ENCODE measurements at regions of chr15 and their contacts with region 1.

Region 1: DNA sequence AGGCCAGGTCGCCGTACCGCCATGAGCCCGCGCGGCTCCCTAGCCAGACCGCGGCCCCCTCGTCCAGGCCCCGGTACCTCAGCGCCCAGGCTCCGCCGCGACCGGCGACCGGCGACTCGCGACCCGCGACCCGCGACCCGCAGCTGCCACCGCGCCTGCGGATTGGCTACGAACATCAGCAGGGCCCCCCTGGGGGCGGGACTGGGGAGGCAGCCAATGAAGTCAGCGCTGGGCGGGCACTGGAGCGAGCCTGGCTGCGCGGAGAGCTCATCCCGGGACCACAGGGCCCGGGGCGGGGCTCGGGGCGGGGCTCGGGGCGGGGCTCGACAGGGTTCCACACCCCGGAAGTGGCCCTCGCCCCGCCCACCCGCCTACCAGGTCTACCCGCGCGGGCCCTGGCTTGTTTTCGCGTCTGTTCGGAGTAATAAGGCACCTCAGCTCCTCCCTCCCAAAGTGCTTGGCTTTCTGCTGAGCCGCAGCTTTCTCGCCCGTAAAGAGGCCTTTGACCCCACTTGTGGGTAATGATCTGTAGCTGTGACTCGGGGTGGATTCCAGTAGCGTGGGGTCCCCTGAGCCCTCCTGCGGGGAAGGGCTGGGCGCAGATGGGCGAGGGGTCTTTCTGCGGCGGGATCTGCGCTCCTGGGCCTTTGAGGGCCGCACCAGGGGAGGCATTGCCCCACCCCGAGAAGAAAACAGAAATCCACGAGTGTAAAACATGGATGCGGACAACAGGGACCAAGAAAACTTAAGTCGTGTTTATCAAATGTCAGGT is at the start of gene LYSMD4:
- DNase-seq: peak; percentile 96
- ATAC-seq: peak; percentile 100
- H3K4me3 ChIP-seq: peak within 1 kb of the TSS; percentile 12 to 89 (median 77)
- H3K4me3 Mint-ChIP-seq: peak within 1 kb of the TSS; percentile 90
- H3K27ac ChIP-seq: peak within 1 kb of the TSS; percentile 70 to 77
- H3K27ac Mint-ChIP-seq: peak within 1 kb of the TSS; percentile 90
- H3K4me1 ChIP-seq: peaks cover 10 to 13% of the 10 kb centered on the region in 2 donors
- H3K4me1 Mint-ChIP-seq: peaks cover 14% of the 10 kb centered on the region
- H3K27me3 ChIP-seq: no peaks in the 10 kb centered on the region
- H3K27me3 Mint-ChIP-seq: no peaks in the 10 kb centered on the region
- CTCF ChIP-seq: no peak
- total RNA-seq, gene LYSMD4: 8.6 and 9.7 TPM in 2 replicates

Region 2: DNA sequence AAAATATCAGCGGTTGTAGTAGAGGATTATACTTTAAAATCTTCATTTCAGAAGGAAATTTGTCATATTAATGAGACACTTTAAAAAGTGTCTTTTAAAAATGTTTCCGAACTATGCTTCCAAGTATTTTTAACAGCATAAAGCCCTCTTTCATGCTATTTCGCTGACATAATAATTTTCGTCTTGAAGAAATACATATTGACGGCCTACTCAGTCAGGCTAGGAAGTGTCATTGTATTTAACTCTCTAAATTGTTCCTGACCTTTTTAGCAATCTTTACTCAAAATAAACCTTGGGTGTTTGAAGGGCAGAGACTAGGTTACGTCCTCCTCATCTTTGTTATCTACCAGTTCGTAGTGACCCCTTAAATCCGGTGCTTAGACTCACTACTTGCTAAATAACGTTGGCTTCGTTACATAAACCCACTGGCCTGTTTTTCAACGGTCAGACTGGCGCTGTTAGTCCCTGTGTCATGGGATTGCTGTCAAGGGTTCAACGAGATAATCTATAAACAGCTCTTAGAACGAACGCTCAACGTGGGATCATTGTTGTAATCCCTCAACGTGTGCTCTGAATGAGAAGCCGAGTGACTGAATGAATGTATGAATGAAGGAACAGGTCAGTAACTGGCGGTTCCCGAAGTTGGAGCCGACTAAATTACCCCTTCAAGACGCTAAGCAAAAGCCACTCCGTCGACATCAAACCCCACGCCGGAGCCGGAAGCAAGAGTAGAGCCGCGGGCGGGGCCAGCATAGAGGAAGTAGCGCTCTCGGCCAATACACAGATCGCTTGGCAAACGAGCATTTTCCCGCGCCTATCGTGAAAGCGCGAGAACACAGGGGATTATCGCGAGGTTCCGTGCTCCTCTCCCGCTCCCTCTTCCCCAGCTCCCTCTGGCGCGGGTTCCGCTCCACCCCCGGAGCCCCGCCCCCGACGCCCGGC is 482.7 kb before region 1 on chr15:
- CTCF ChIA-PET with region 1: interaction called, 3 read pairs
- POLR2A ChIA-PET with region 1: interaction called, 18 read pairs
- intact Hi-C with region 1: loop called (anchors 1 kb)
- DNase-seq: peak; percentile 97
- ATAC-seq: peak; percentile 97
- H3K4me3 ChIP-seq: peak overlapping the region; percentile 61 to 91 (median 81)
- H3K4me3 Mint-ChIP-seq: peak overlapping the region; percentile 96
- H3K27ac ChIP-seq: peak overlapping the region; percentile 70 to 81
- H3K27ac Mint-ChIP-seq: peak overlapping the region; percentile 92
- H3K4me1 ChIP-seq: peaks cover 18 to 30% of the 10 kb centered on the region in 2 donors
- H3K4me1 Mint-ChIP-seq: peaks cover 31% of the 10 kb centered on the region
- H3K27me3 ChIP-seq: no peaks in the 10 kb centered on the region
- H3K27me3 Mint-ChIP-seq: no peaks in the 10 kb centered on the region
- CTCF ChIP-seq: no peak

Region 3: DNA sequence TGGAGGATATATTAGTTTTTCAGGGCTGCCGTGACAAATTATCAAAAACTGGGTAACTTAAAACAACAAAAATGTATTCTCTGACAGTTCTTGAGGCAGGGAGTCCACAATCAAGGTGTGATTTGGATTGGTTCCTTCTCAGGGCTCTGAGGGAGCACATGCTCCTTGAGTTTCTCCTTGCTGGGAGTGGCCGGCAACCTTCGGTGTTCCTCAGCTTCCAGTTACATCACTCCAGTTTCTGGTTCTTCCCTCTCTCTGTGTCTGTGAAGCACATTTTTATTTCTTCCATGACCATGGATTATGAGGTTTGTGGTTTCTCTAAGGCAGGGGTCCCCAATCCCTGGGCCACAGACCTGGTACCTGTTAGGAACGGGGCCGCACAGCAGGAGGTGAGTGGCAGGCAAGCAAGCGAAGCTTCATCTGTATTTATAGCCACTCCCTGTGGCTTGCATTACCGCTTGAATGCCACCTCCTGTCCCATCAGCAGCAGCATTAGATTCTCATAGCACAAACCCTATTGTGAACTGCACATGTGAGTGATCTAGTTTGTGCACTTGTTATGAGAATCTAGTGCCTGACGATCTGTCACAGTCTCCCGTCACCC is 457.8 kb before region 1 on chr15:
- CTCF ChIA-PET with region 1: interaction called, 48 read pairs
- POLR2A ChIA-PET with region 1: no interaction called
- intact Hi-C with region 1: loop called (anchors 1 kb)
- DNase-seq: peak; percentile 22
- ATAC-seq: peak; percentile 17
- H3K4me3 ChIP-seq: no peak overlapping the region
- H3K4me3 Mint-ChIP-seq: no peak overlapping the region
- H3K27ac ChIP-seq: no peak overlapping the region
- H3K27ac Mint-ChIP-seq: no peak overlapping the region
- H3K4me1 ChIP-seq: peaks cover 6 to 10% of the 10 kb centered on the region in 2 donors
- H3K4me1 Mint-ChIP-seq: peaks cover 11% of the 10 kb centered on the region
- H3K27me3 ChIP-seq: no peaks in the 10 kb centered on the region
- H3K27me3 Mint-ChIP-seq: no peaks in the 10 kb centered on the region
- CTCF ChIP-seq: no peak

Region 4: DNA sequence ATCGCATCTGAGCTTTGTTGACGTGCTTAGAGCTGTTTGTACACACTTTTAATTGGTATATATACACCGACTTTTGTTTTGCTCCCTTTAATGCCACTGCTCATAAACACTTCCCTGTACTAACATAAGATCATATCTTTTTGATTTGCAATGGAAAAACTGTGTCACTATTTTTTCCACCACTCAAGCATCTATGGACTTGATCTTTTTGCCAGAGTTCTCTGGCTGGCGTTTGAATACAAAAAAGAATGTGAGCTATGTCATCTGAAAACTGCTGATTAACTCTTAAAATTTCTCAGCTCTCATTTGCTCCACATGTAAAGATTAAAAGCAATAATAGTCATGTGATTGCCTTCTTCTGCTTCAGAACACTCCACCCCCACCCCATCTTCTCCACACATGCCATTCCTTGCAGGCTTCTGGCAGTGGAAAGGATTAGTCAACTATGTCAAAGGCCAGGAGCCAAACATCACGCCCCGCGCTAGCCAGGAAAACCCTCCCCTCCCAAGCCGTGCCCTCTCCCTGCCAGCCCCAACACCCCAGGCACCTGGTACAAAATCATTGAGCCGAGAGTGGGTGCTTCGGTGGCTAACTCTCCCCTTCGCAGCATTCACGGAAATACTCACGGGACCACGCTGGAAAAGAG is 291.1 kb before region 1 on chr15:
- CTCF ChIA-PET with region 1: no interaction called
- POLR2A ChIA-PET with region 1: no interaction called
- intact Hi-C with region 1: no loop called
- DNase-seq: peak; percentile 1
- ATAC-seq: peak; percentile 57
- H3K4me3 ChIP-seq: no peak overlapping the region
- H3K4me3 Mint-ChIP-seq: peak overlapping the region; percentile 44
- H3K27ac ChIP-seq: no peak overlapping the region
- H3K27ac Mint-ChIP-seq: peak overlapping the region; percentile 17
- H3K4me1 ChIP-seq: peaks cover 34 to 46% of the 10 kb centered on the region in 2 donors
- H3K4me1 Mint-ChIP-seq: peaks cover 36% of the 10 kb centered on the region
- H3K27me3 ChIP-seq: no peaks in the 10 kb centered on the region
- H3K27me3 Mint-ChIP-seq: no peaks in the 10 kb centered on the region
- CTCF ChIP-seq: no peak

Region 5: GRCh38 chr15:99755692-99756409 is 22.4 kb after region 1 on chr15:
- CTCF ChIA-PET with region 1: interaction called, 14 read pairs
- POLR2A ChIA-PET with region 1: no interaction called
- intact Hi-C with region 1: loop called (anchors 1 kb)
- DNase-seq: peak; percentile 82
- ATAC-seq: peak; percentile 92
- H3K4me3 ChIP-seq: no peak overlapping the region
- H3K4me3 Mint-ChIP-seq: no peak overlapping the region
- H3K27ac ChIP-seq: no peak overlapping the region
- H3K27ac Mint-ChIP-seq: no peak overlapping the region
- H3K4me1 ChIP-seq: peaks cover 5 to 6% of the 10 kb centered on the region in 2 donors
- H3K4me1 Mint-ChIP-seq: peaks cover 7% of the 10 kb centered on the region
- H3K27me3 ChIP-seq: no peaks in the 10 kb centered on the region
- H3K27me3 Mint-ChIP-seq: peaks cover 3% of the 10 kb centered on the region
- CTCF ChIP-seq: peak; percentile 96

Region 6: DNA sequence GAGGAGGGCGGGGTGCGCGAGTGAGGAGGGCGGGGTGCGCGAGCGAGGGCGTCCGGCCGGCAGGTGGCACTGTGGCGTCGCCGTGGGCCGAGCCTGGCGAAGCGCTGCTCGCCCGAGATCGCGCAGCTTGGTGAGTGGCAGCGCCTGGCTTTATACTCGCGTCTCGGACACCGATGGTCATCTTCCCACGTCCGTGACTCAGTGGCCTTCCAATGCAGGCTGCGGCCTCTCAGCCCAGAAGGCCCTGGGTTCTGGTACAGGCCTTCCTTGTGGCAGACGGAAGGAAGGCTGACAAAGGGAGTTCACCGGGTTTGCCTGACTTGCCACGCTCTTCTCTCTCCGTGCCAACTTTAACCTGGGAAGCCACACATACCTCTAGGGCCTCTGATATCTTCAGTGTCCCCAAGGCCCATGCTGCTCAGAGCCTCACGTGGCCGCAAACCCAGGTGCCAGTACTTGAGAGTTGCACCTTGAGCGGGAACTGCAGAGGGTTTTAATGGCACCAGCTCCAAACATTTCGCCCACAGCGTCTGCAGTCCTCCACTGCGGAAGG is 195.1 kb after region 1 on chr15:
- CTCF ChIA-PET with region 1: no interaction called
- POLR2A ChIA-PET with region 1: no interaction called
- intact Hi-C with region 1: loop called (anchors 5 kb)
- DNase-seq: peak; percentile 92
- ATAC-seq: peak; percentile 91
- H3K4me3 ChIP-seq: peak overlapping the region; percentile 44 to 72 (median 60)
- H3K4me3 Mint-ChIP-seq: peak overlapping the region; percentile 89
- H3K27ac ChIP-seq: peak overlapping the region; percentile 72 to 75
- H3K27ac Mint-ChIP-seq: peak overlapping the region; percentile 91
- H3K4me1 ChIP-seq: peaks cover 11 to 16% of the 10 kb centered on the region in 2 donors
- H3K4me1 Mint-ChIP-seq: peaks cover 10% of the 10 kb centered on the region
- H3K27me3 ChIP-seq: peaks cover 0 to 2% (median 0%) of the 10 kb centered on the region in 4 experiments
- H3K27me3 Mint-ChIP-seq: peaks cover 5% of the 10 kb centered on the region
- CTCF ChIP-seq: peak; percentile 61

Region 7: GRCh38 chr15:101723874-101724674 is 1990.6 kb after region 1 on chr15 and contains the start of gene TARS3:
- CTCF ChIA-PET with region 1: no interaction called
- POLR2A ChIA-PET with region 1: no interaction called
- intact Hi-C with region 1: loop called (anchors 5 kb)
- DNase-seq: peak; percentile 96
- ATAC-seq: peak; percentile 89
- H3K4me3 ChIP-seq: peak within 1 kb of the TSS; percentile 49 to 74 (median 69)
- H3K4me3 Mint-ChIP-seq: peak within 1 kb of the TSS; percentile 82
- H3K27ac ChIP-seq: peak within 1 kb of the TSS; percentile 45 to 77
- H3K27ac Mint-ChIP-seq: peak within 1 kb of the TSS; percentile 80
- H3K4me1 ChIP-seq: peaks cover 10 to 11% of the 10 kb centered on the region in 2 donors
- H3K4me1 Mint-ChIP-seq: peaks cover 17% of the 10 kb centered on the region
- H3K27me3 ChIP-seq: no peaks in the 10 kb centered on the region
- H3K27me3 Mint-ChIP-seq: no peaks in the 10 kb centered on the region
- CTCF ChIP-seq: no peak
- total RNA-seq, gene TARS3: 27.0 and 32.3 TPM in 2 replicates